ENCODE measurements at regions of chr3 and their contacts with region 1.

Region 1: GRCh38 chr3:197002701-197003454 is 26.7 kb downstream of the MELTF start:
- DNase-seq: peak; percentile 50 to 76 (median 72)
- H3K4me3 ChIP-seq: peak overlapping the region in 2 of 4 donors; percentile 21 to 80
- H3K27ac ChIP-seq: peak overlapping the region in 3 of 5 donors; percentile 5 to 80 (median 80)
- H3K4me1 ChIP-seq: peaks cover 0 to 3% of the 10 kb centered on the region in 2 donors
- H3K27me3 ChIP-seq: no peaks in the 10 kb centered on the region
- CTCF ChIP-seq: peak; percentile 8 to 88 (median 62)
- POLR2A ChIP-seq: peak in 1 of 2 donors; percentile 27

Region 2: DNA sequence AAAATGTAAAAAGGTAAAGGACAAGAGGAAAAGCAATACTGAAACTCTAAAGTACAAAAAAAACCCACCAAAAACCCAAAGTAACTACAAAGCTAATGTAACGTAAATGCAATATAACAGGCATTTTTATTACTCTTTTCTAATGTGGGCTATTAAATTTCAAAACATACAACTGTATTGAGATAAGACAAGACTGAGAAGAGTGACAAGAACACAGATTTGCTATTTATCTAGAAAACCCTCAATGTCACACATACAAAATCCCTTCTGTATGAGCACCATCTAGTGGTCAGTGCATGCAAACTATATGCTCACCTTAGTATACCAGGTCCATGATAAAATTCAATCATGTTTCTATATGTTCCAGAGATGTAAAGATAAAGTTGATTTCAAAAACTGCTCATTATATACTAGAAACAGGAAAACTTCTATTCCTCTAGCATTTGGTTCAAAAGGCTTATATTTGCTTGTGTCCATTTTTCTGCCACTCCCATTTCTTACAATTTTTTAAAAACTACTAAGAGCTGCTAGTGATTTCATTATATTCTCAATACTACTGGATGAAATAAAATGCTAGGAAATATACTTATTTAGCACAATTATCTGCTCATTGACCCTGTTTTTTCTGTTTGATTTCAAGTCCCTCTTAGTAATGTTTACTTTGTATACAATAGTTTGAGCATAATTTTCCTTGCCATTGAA is 184.2 kb after region 1 on chr3:
- intact Hi-C with region 1: loop called (anchors 10 kb)
- DNase-seq: peak in 2 of 7 donors; percentile 13 to 27
- H3K4me3 ChIP-seq: no peak overlapping the region
- H3K27ac ChIP-seq: no peak overlapping the region
- H3K4me1 ChIP-seq: peaks cover 0 to 9% of the 10 kb centered on the region in 2 donors
- H3K27me3 ChIP-seq: no peaks in the 10 kb centered on the region
- CTCF ChIP-seq: peak; percentile 68 to 81 (median 76)
- POLR2A ChIP-seq: no peak